ENCODE measurements at regions of chr10 and their contacts with region 1.

Region 1: GRCh38 chr10:11515596-11516430 is 95.6 kb downstream of the USP6NL start:
- DNase-seq: peak; percentile 80
- H3K4me3 ChIP-seq: no peak overlapping the region
- H3K27ac ChIP-seq: no peak overlapping the region
- H3K4me1 ChIP-seq: no peaks in the 10 kb centered on the region
- H3K27me3 ChIP-seq: no peaks in the 10 kb centered on the region

Region 2: DNA sequence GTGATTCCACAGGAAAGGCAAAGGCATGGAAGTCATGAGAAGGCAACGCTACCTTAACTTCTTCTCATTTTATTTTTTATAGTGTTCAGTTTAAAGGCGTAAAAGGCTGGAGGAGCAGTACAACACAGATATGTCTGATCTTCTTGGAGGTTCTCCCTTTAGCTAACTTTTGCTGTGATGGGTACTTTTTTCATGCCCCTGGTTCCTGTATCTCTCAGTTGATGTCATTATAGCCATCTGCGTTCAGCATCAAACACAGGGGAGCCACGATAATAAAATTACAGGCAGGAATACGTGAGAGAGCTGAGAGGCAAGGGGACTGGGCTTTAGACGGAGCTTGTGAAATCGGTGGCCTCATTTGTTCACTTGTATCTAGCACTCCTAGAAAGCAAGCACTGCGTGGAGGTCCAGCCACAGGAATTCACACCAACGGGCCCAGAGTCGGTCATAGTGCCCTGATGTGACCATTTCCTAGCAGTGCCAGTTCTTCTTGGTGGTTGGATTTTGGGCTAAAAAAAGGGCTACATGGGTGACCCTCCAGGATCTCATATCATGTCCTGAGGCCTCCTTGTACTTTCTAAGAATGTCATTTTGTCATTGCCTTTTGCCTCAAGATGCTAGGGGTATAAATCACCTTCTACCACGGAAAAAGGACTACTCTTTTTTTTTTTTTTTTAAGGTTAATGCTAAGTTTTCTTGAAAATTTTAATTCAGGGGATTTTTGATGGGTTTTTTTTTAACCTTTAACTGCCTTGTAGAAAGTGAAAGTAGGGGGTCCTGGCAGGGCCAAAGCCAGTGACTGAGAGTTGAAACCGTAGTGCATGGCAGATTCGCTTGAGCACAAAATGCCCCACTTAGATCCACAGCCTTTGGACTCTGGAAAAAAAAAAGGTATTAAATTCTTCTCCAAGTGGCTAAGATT is 306.6 kb before region 1 on chr10:
- in situ Hi-C with region 1: no loop called
- DNase-seq: no peak
- H3K4me3 ChIP-seq: no peak overlapping the region
- H3K27ac ChIP-seq: no peak overlapping the region
- H3K4me1 ChIP-seq: no peaks in the 10 kb centered on the region
- H3K27me3 ChIP-seq: no peaks in the 10 kb centered on the region

Region 3: DNA sequence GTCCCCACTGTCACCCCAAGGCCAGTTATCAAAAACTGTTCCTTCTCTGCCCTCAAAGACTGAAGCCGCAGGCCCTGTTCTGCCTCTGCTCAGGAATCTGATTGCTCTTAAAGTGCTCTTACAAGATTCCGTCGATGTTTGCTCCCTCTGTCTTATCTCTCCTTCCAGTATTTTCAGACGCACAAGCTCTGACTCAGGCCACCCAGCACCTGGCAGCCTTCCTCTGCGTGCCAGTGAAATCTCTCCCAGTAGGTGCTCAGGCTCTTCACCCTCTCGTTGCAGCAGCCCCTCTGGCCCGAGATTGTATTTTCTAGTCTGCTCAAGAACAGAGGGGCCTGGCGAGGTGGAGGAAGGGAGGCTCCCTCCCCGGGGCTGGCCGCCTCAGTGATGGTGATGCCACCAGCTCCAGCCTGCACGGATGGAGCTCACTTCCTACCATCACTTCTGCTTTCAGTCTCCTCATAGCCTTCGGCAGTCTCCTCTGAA is 180.6 kb before region 1 on chr10:
- in situ Hi-C with region 1: no loop called
- DNase-seq: no peak
- H3K4me3 ChIP-seq: no peak overlapping the region
- H3K27ac ChIP-seq: no peak overlapping the region
- H3K4me1 ChIP-seq: peaks cover 7% of the 10 kb centered on the region; the same call in 1 of the 2 replicates
- H3K27me3 ChIP-seq: no peaks in the 10 kb centered on the region

Region 4: GRCh38 chr10:11724938-11725776 is 209.3 kb after region 1 on chr10:
- in situ Hi-C with region 1: loop called (anchors 10 kb)
- DNase-seq: peak; percentile 79
- H3K4me3 ChIP-seq: no peak overlapping the region
- H3K27ac ChIP-seq: no peak overlapping the region
- H3K4me1 ChIP-seq: no peaks in the 10 kb centered on the region
- H3K27me3 ChIP-seq: peaks cover 26% of the 10 kb centered on the region

Region 5: DNA sequence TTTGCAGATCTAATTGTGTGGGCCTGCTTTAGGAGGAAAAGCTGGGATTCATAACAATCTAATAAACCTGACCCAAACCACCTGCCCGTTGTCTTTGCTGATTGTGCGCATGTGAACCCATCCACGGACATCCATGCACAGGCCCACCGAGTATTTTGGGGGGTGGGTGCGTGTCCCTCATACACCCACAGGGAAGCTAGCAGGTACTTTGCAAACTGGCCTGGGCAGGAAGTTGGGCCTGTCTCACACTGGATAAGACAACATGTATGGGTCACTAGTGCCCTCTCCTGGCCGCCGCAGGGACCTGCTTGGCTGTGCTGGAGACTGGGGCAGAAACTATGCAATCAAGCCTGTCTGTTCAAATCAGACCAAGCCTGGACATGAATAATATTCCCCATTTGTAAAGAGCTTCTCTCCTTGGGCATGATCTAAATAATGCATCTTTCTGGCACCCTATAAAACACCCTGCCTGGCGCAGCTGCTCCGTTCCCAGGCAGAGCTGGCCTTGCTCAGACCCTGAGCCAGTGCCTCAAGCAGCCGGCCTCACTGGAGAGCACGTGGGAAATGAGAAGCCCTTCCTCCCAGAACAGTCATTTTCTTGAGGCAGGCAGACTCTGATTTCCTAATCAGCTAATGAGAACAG is 242.1 kb after region 1 on chr10:
- in situ Hi-C with region 1: loop called (anchors 10 kb)
- DNase-seq: peak; percentile 85
- H3K4me3 ChIP-seq: no peak overlapping the region
- H3K27ac ChIP-seq: peak overlapping the region; percentile 55
- H3K4me1 ChIP-seq: peaks cover 10% of the 10 kb centered on the region
- H3K27me3 ChIP-seq: no peaks in the 10 kb centered on the region